ENCODE measurements at regions of chr13 and their contacts with region 1.

Region 1: GRCh38 chr13:48094781-48095502 is at the start of gene MED4:
- DNase-seq: peak; percentile 93 to 98 (median 96)
- H3K4me3 ChIP-seq: peak within 1 kb of the TSS; percentile 52 to 97 (median 88)
- H3K27ac ChIP-seq: peak within 1 kb of the TSS in 4 of 5 donors; percentile 60 to 92 (median 84)
- H3K4me1 ChIP-seq: peaks cover 11 to 35% of the 10 kb centered on the region in 2 donors
- H3K27me3 ChIP-seq: no peaks in the 10 kb centered on the region
- CTCF ChIP-seq: peak; percentile 98 to 100 (median 99)
- POLR2A ChIP-seq: peak; percentile 66 to 85
- total RNA-seq, gene MED4: 12.9 to 47.7 (median 35.7) TPM

Region 2: DNA sequence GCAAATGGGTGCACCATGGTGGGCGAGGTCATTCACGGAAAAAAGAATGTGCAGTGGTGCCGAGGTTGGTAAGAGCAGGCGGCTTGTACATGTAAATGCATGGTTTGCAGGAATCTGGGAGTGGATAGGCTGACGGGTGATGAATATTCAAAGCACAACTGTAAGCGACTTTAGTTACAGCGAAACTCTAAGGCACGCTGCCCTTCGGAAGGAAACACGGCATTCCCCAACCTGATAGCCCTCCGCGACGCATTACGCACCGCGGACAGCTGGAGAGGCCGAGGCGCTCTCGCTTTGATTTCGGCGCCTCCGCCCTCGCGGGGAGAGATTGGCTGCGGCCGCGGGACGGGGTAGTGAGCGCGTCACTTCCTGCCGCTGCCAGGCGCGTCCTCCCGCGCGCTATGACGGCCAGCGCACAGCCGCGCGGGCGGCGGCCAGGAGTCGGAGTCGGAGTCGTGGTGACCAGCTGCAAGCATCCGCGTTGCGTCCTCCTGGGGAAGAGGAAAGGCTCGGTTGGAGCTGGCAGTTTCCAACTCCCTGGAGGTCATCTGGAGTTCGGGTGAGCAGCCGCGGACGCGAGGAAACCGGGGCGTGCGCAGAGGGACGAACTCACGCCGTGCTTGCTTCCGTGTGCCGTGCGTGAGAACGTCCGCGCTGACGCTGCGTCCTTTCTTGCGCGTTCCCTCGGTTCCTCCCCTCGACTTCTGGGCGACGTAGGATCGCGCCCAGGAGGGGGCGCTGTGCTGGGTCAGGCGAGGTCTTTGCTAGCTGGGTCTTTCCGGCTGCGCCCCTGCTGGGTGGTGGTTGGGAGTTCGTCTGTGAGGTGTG is 57.4 kb before region 1 on chr13 and contains the start of gene NUDT15:
- intact Hi-C with region 1: loop called in 1 of 2 experiments (anchors 10 kb)
- DNase-seq: peak; percentile 93 to 97 (median 95)
- H3K4me3 ChIP-seq: peak within 1 kb of the TSS; percentile 29 to 69 (median 50)
- H3K27ac ChIP-seq: peak within 1 kb of the TSS; percentile 94 to 98 (median 97)
- H3K4me1 ChIP-seq: peaks cover 9 to 10% of the 10 kb centered on the region in 2 donors
- H3K27me3 ChIP-seq: no peaks in the 10 kb centered on the region
- CTCF ChIP-seq: peak; percentile 96 to 100 (median 99)
- POLR2A ChIP-seq: peak; percentile 93
- total RNA-seq, gene NUDT15: 4.0 to 18.4 (median 12.0) TPM

Region 3: GRCh38 chr13:48303359-48304142 is 208.6 kb after region 1 on chr13 and contains the start of gene RB1:
- intact Hi-C with region 1: no loop called
- DNase-seq: peak; percentile 91 to 96 (median 95)
- H3K4me3 ChIP-seq: peak within 1 kb of the TSS; percentile 89 to 97 (median 94)
- H3K27ac ChIP-seq: peak within 1 kb of the TSS; percentile 71 to 100 (median 100)
- H3K4me1 ChIP-seq: peaks cover 9 to 30% of the 10 kb centered on the region in 2 donors
- H3K27me3 ChIP-seq: no peaks in the 10 kb centered on the region
- CTCF ChIP-seq: peak in 2 of 6 experiments; percentile 2 to 23
- POLR2A ChIP-seq: peak; percentile 92 to 96
- total RNA-seq, gene RB1: 26.1 to 78.0 (median 49.7) TPM